ENCODE measurements at regions of chr4 and their contacts with region 1.

Region 1: DNA sequence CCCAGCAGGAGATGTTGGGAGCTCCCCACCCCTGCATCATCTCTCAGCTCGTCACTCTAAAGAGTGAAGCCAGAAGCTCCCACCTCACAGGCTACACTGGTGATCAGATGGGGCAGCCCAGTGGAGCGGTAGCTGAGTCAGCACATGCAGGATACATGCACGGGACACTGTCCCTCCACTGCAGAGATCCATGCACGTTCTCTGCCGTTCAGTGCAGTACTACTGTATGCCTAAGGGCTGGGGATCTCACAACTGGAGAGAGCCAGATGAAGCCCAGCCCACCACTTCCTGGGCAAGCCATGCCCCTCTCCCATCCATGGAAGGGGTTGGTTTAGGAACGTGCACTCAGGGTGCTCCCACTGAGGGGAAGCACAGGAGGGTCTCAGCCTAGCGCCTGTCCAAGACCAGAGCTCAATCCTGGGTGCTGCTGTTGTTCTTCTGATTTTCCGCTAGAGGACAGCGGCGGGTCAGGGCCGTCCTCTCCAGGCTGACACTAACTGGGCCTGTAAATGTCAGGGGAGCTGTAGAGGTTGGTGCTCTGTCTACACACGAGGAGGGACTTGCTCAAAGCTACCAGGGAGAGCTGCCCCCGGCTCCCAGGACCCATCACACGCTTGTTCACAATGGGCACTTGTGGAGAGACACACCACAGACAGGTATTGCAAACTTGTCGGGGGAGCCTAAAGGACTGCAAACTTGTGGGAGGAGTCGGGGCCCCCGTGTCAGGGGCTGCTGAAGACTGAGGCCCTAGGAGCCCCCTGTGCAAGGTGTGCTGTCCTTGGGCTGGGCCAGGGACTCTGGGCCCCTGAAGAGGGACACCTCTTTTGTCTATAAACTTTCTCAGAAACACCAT is 18.2 kb upstream of the ABLIM2 start:
- DNase-seq: peak in 12 of 14 experiments; percentile 30 to 69 (median 41)
- ATAC-seq: peak; percentile 97
- H3K4me3 ChIP-seq: no peak overlapping the region
- H3K4me3 Mint-ChIP-seq: no peak overlapping the region
- H3K27ac ChIP-seq: no peak overlapping the region
- H3K27ac Mint-ChIP-seq: no peak overlapping the region
- H3K4me1 ChIP-seq: peaks cover 10% of the 10 kb centered on the region
- H3K4me1 Mint-ChIP-seq: no peaks in the 10 kb centered on the region
- H3K27me3 ChIP-seq: no peaks in the 10 kb centered on the region
- H3K27me3 Mint-ChIP-seq: peaks cover under 1% of the 10 kb centered on the region
- CTCF ChIP-seq: peak; percentile 70

Region 2: DNA sequence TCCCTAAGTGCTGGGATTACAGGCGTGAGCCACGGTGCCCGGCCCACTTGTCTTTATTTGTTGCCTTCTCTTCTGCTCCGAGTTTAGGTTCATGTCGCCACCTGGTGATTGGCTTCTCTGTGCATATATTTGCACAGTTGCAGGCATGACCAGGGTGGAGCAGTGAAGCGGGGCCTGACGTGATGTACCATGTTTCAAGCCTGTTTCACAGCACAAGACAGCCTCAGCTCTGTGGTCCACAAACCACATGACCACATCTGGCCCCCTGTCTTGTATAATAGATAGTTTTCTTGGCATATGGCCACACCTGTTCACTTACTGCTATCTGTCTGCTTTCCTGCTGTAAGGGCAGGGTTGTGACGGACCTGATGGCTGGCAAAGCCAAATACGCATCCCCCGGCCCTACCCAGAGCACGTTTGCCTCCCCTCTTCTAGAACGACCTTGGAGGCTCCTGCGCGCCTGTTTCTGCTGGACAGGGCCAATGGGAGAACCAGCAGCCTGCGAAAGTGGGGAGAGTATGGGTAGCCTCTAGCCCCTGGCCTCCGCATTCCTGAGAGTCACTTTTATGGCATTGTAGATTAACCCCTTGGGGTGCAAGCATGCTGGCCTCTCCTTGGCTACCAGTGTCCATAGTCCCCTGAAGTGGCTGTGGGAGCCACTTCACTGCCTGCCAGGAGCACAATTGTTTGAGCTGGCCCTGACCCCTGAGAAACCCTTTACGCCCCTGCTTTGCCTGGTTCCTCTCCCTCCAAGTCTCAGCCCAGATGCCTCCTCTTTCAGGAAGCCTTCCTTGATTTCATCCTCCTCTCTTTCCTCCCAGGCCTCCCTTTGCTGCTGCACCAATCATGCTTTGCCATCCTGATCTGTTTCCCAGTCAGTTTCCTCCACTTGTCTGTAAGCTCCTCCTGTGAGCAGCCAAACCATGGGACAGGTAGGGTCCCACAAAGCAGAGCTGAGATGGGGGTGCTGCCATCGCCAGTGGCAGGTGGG is 16.3 kb after region 1 on chr4:
- CTCF ChIA-PET with region 1: interaction called, 10 read pairs
- POLR2A ChIA-PET with region 1: no interaction called
- intact Hi-C with region 1: loop called in 1 of 2 experiments (anchors 2 kb)
- DNase-seq: peak in 6 of 14 experiments; percentile 25 to 64 (median 40)
- ATAC-seq: peak; percentile 88
- H3K4me3 ChIP-seq: no peak overlapping the region
- H3K4me3 Mint-ChIP-seq: no peak overlapping the region
- H3K27ac ChIP-seq: no peak overlapping the region
- H3K27ac Mint-ChIP-seq: no peak overlapping the region
- H3K4me1 ChIP-seq: peaks cover 7% of the 10 kb centered on the region
- H3K4me1 Mint-ChIP-seq: peaks cover 9% of the 10 kb centered on the region
- H3K27me3 ChIP-seq: peaks cover 0 to under 1% of the 10 kb centered on the region in 2 experiments
- H3K27me3 Mint-ChIP-seq: no peaks in the 10 kb centered on the region
- CTCF ChIP-seq: no peak

Region 3: DNA sequence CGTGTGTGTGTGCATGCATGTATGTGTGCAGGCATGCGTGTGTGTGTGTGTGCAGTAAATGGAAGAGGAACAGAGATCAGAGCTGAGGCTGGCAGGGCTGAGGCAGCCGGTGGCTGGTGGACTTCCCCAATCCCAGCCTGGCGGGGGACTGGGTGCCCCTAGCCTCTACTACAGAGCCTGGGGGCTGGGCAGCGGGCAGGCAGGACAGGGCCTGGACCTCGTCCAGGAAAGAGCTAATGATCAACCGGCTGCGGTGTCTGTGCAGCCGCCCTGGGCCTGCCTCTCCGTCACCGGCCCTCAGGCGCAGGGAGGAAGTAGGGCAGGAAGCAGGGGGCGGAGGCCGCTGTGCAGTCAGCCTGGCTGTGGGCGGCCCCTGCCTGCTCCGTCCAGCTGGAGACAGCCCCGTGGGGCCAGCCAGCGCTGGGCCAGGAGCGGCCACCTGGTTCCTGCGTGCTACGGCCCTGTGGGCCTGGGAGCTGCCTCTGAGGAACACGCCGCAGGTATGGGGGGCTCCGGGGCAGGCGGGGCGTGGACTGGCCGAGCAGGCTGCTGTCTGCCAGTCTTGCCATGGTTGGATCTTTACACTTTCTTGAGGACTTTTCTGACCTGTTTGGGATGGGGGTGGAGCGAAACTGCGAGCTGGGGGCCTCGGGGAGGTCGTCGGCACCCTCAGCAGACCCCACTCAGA is 22.3 kb after region 1 on chr4 and contains the start of gene SH3TC1:
- CTCF ChIA-PET with region 1: interaction called, 10 read pairs
- POLR2A ChIA-PET with region 1: interaction called, 8 read pairs
- intact Hi-C with region 1: loop called in 1 of 2 experiments (anchors 2 kb)
- DNase-seq: peak; percentile 34 to 81 (median 56)
- ATAC-seq: peak; percentile 55
- H3K4me3 ChIP-seq: peak within 1 kb of the TSS; percentile 70
- H3K4me3 Mint-ChIP-seq: peak within 1 kb of the TSS; percentile 99
- H3K27ac ChIP-seq: peak within 1 kb of the TSS; percentile 68 to 79
- H3K27ac Mint-ChIP-seq: peak within 1 kb of the TSS; percentile 99
- H3K4me1 ChIP-seq: peaks cover 53% of the 10 kb centered on the region
- H3K4me1 Mint-ChIP-seq: peaks cover 37% of the 10 kb centered on the region
- H3K27me3 ChIP-seq: no peaks in the 10 kb centered on the region
- H3K27me3 Mint-ChIP-seq: no peaks in the 10 kb centered on the region
- CTCF ChIP-seq: no peak
- total RNA-seq, gene SH3TC1: 119 to 127 TPM

Region 4: DNA sequence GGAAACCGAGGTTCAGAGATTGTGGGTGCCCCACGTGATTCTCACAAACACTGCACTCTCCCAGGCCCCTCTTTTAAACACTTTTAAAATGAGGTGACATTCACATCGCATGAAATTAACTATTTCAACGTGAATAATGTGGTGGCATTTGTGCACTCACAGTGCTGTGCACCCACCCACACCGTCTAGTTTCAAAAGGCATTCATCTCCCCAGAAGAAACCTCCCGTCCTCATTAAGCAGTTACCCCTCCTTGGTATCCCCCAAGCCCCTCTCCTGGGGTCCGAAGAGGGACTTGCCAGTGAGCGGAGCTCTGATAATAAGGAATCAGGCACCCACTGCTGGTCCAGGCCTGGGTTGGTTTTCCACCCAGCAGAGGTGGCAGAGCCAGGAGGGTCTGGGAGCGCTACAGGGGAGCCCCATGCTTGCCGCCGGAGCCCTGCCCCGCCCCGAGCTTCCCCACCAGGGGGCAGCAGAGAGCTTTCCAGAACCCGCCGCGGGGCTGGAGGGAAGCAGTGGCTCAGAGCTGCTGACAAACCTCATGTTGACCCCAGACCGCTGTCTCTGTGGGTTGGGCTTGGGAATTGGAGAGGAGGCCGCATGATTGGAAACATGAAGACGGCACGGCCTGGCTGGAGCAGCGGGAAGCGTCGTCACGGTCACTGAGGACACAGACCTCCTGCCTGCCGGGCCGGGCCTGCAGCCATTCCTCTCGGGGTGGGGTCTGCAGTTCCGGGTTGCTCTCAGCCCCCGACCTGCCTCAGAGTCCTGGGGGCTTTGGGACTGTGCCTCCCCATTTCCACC is 65.3 kb after region 1 on chr4:
- CTCF ChIA-PET with region 1: interaction called, 3 read pairs
- POLR2A ChIA-PET with region 1: no interaction called
- intact Hi-C with region 1: loop called in 1 of 2 experiments (anchors 5 kb)
- DNase-seq: peak; percentile 65 to 87 (median 78)
- ATAC-seq: peak; percentile 82
- H3K4me3 ChIP-seq: no peak overlapping the region
- H3K4me3 Mint-ChIP-seq: no peak overlapping the region
- H3K27ac ChIP-seq: no peak overlapping the region
- H3K27ac Mint-ChIP-seq: no peak overlapping the region
- H3K4me1 ChIP-seq: peaks cover 15% of the 10 kb centered on the region
- H3K4me1 Mint-ChIP-seq: no peaks in the 10 kb centered on the region
- H3K27me3 ChIP-seq: no peaks in the 10 kb centered on the region
- H3K27me3 Mint-ChIP-seq: no peaks in the 10 kb centered on the region
- CTCF ChIP-seq: peak; percentile 96

Region 5: DNA sequence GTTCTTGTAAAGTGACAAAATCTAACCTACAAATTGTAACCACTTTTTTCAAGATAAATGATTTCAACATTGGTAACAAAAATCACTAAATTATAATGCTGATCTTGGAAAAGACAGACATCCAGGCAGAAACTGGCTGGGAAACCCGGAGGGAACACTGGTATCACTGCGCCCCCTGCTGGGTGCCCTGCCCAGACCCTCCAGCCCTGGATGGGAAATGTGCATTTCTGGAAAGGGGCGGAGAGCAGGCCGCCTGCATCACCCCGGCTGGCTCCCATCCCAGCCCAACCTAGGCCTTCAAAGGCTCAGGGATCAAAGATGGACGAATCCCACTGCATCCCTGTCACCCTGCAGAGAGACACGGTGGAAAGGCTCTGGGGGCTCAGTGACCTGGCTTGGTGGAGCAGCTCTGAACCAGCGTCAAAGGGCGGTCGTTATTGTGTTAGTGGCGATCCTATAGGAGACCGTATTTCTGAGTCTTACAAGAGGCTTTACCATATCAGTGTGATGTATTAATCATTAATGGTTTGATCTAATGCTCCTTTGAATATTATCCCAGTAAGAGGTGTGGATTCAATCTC is 226.5 kb after region 1 on chr4:
- CTCF ChIA-PET with region 1: interaction called, 11 read pairs
- POLR2A ChIA-PET with region 1: no interaction called
- intact Hi-C with region 1: loop called (anchors 1 kb)
- DNase-seq: peak in 13 of 14 experiments; percentile 20 to 71 (median 41)
- ATAC-seq: peak; percentile 46
- H3K4me3 ChIP-seq: no peak overlapping the region
- H3K4me3 Mint-ChIP-seq: no peak overlapping the region
- H3K27ac ChIP-seq: no peak overlapping the region
- H3K27ac Mint-ChIP-seq: no peak overlapping the region
- H3K4me1 ChIP-seq: no peaks in the 10 kb centered on the region
- H3K4me1 Mint-ChIP-seq: no peaks in the 10 kb centered on the region
- H3K27me3 ChIP-seq: no peaks in the 10 kb centered on the region
- H3K27me3 Mint-ChIP-seq: no peaks in the 10 kb centered on the region
- CTCF ChIP-seq: peak; percentile 85

Region 6: DNA sequence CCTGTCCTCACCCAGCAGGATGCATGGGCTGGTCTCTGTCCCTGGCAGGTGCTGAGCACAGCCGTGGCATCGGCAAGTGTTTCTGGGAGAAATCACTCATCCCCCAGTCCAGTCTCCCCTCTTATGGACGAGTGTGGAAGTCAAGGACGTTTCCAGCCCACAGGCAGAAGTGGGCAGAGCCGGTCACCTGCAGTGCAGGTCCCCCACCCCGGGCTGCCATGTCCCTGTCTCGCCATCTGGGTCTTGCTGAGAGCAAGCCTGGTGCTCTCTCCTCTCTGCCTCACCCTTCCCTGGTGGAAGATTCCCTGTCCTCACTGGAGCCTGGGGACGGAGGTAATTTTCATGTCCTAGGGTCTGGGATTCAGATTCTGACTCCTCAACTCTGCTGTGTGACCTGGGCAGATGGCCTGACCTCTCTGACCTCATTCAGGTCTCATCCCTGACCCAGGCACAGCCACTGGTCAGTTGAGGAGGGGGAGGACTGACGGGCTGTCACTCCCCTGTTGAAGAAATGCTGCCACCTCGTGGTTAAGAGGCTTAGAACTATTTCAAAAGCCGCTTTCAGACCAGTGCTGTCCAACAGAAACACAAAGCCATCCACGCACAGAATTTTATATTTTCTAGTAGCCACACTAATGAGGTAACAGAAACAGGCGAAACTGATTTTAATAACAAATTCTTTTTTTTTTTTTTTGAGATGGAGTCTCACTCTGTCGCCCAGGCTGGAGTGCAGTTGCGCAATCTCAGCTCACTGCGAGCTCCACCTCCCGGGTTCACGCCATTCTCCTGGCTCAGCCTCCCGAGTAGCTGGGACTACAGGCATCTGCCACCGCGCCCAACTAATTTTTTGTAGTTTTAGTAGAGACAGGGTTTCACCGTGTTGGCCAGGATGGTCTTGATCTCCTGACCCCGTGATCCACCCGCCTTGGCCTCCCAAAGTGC is 417.6 kb after region 1 on chr4:
- CTCF ChIA-PET with region 1: no interaction called
- POLR2A ChIA-PET with region 1: no interaction called
- intact Hi-C with region 1: loop called in 1 of 2 experiments (anchors 5 kb)
- DNase-seq: peak in 1 of 14 experiments; percentile 14
- ATAC-seq: no peak
- H3K4me3 ChIP-seq: no peak overlapping the region
- H3K4me3 Mint-ChIP-seq: no peak overlapping the region
- H3K27ac ChIP-seq: no peak overlapping the region
- H3K27ac Mint-ChIP-seq: no peak overlapping the region
- H3K4me1 ChIP-seq: no peaks in the 10 kb centered on the region
- H3K4me1 Mint-ChIP-seq: no peaks in the 10 kb centered on the region
- H3K27me3 ChIP-seq: peaks cover 23 to 42% of the 10 kb centered on the region in 2 experiments
- H3K27me3 Mint-ChIP-seq: peaks cover 38% of the 10 kb centered on the region
- CTCF ChIP-seq: no peak